ENCODE measurements at regions of chr19 and their contacts with region 1.

Region 1: DNA sequence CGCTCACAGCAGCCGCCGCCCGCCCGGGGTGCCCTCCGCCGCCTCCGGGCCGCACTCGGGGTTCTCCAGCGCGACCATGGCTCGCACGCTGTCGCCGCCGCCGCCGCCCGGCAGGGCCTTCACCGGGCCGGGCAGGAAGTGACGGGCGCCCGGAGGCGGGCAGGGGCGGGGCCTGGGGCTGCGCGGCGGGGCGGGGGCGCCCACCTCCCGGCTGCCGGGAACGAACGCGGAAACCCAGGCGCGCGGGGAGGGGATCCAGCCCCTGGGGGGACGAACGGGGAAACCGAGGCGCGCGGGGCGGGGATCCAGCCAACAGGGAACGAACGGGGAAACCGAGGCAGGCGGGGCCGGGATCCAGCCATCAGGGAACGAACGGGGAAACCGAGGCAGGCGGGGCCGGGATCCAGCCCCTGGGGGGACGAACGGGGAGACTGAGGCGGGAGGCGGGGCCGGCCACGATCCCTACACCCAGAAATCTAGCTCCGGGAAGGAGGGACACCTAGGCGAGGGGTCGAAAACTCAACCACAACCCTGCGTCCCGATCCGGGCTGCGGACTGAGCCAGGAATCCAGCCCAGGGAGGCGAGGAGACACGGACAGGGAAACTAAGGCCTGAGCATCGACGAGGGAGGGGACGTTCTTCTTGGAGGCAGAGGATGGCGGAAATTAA is at the start of gene R3HDM4:
- DNase-seq: peak; percentile 92
- ATAC-seq: peak; percentile 94
- total RNA-seq, gene R3HDM4: 21.9 TPM

Region 2: DNA sequence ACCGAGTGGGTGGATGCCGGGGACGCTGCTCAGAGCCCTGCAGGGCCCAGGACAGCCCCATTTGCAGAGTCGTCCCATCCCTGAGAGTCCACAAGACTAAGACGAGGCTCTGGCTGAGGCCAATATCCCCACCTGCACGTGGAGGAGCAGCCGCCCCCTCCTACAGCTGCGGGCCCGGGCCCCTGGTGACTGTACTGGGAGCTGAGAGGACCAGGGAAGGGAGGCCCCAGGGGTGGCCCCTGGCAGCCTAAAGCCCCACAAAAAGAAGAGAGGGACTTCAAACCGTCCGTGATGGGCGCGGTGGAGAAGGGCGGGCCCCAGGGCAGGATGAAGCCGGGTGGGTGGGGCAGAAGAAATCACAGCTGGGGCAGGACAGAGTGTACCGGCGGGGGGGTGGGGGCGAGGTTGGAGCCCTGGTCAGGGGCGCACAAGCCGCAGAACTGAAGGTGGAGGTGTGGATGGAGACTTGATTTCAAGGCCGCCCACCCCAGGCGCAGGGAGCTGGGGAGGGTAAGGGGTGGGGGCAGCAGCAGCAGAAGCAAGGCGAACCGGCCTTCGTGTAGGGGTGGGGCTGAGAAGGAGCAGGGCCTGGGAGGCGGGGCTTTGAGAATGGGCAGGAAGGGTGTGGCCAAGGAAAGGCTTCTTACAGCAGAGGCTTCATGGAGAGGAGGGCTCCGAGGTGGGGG is 40.8 kb before region 1 on chr19:
- intact Hi-C with region 1: loop called (anchors 5 kb)
- DNase-seq: peak; percentile 85
- ATAC-seq: peak; percentile 35